Common myeloid progenitor, CD34-positive (primary cell): ENCODE measurements at regions of chr5 and their contacts with region 1.

Region 1: GRCh38 chr5:90854169-90854568 is 295.6 kb downstream of the ADGRV1 start:
- DNase-seq: peak; percentile 21 to 85 (median 74)
- H3K4me3 ChIP-seq: peak overlapping the region in 1 of 7 experiments; percentile 11
- H3K27ac ChIP-seq: no peak overlapping the region
- H3K4me1 ChIP-seq: peaks cover 4 to 26% (median 18%) of the 10 kb centered on the region in 4 experiments
- H3K27me3 ChIP-seq: no peaks in the 10 kb centered on the region

Region 2: GRCh38 chr5:90866333-90866732 is 12.2 kb after region 1 on chr5:
- CTCF ChIA-PET with region 1: interaction called, 19 read pairs
- POLR2A ChIA-PET with region 1: no interaction called
- DNase-seq: peak; percentile 26 to 33 (median 31)
- H3K4me3 ChIP-seq: peak overlapping the region in 3 of 7 experiments; percentile 30 to 60 (median 39)
- H3K27ac ChIP-seq: peak overlapping the region in 1 of 2 experiments; percentile 32
- H3K4me1 ChIP-seq: peaks cover 0 to 14% (median 4%) of the 10 kb centered on the region in 4 experiments
- H3K27me3 ChIP-seq: no peaks in the 10 kb centered on the region

Region 3: DNA sequence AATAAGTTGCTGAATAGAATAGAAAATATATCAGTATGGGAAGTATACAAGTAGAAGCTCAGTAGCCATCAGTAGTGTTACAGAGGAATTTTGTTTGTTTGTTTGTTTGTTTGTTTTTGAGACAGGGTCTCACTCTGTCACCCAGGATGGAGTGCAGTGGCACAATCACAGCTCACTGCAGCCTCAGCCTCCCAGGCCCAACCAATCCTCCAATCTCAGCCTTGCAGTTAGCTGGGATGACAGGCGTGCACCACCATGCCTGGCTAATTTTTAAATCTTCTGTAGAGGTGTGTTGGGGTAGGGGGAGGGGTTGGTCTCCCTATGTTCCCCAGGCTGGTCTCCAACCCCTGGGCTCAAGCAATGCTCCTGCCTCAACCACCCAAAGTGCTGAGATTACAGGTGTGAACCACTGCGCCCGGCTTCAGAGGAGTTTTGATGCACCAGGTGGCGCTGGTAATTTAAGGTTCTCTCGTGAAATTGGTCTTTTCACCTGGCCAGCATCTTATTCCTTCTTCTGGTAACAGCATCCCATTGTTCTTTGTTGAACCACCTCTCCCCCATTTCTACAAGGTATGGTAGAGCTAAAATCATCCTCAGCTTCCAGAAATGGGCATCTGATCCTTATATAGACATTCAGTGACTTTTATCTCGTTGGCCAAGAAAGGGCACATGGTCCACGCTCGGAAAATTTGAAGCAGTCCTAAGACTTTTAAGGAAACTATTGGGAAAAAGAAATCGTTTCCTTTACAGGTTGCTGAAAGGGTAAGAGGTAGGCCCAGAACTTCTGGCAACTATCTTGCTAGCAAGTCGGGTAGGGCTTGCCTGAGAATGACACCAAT is 371.9 kb after region 1 on chr5:
- CTCF ChIA-PET with region 1: no interaction called
- POLR2A ChIA-PET with region 1: no interaction called
- DNase-seq: peak; percentile 18 to 35 (median 31)
- H3K4me3 ChIP-seq: no peak overlapping the region
- H3K27ac ChIP-seq: no peak overlapping the region
- H3K4me1 ChIP-seq: peaks cover 0 to 2% (median 0%) of the 10 kb centered on the region in 4 experiments
- H3K27me3 ChIP-seq: no peaks in the 10 kb centered on the region